ENCODE measurements at regions of chr3 and their contacts with region 1.

Region 1: DNA sequence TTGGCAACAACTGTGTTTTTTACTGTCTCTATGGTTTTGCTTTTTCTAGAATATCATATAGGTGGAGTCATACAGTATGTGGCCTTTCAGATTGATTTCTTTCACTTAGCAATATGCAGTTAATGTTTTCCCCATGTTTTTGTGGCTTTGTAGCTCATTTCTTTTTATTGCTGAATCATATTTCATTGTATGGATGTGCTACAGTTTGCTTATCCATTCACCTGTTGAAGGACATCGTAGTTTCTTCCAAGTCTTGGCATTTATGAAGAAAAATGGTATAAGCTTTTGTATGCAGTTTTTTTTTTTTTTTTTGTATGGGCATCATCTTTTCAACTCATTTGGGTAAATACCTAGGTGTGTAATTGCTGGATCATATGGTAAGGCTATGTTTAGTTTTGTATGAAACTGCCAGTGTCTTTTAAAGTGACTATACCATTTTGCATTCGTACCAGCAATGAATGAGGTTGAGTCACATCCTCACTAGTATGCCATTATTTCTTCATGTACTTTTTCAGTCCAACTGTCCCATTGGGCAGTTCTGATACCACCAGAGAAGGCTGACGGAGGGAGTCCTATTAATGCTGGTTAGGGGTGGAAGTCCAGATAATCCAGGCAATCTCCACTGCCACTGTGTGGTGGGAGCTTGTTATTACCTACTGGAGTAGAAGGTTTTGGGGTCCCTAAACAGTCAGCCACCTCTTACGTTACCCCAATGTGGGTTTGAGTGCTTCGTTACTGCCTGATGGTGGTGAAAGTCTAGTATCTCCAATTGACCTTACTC is 210.5 kb downstream of the DOCK3 start:
- DNase-seq: no peak
- ATAC-seq: no peak; the same call in 1 of the 2 replicates
- H3K4me3 ChIP-seq: no peak overlapping the region
- H3K27ac ChIP-seq: no peak overlapping the region
- H3K4me1 ChIP-seq: no peaks in the 10 kb centered on the region
- H3K27me3 ChIP-seq: no peaks in the 10 kb centered on the region
- CTCF ChIP-seq: peak in 2 of 3 experiments; percentile 28 to 46; a peak in 2 of 6 replicates
- POLR2A ChIP-seq: no peak
- RAD21 ChIP-seq: peak; percentile 47; the same call in 1 of the 2 replicates

Region 2: DNA sequence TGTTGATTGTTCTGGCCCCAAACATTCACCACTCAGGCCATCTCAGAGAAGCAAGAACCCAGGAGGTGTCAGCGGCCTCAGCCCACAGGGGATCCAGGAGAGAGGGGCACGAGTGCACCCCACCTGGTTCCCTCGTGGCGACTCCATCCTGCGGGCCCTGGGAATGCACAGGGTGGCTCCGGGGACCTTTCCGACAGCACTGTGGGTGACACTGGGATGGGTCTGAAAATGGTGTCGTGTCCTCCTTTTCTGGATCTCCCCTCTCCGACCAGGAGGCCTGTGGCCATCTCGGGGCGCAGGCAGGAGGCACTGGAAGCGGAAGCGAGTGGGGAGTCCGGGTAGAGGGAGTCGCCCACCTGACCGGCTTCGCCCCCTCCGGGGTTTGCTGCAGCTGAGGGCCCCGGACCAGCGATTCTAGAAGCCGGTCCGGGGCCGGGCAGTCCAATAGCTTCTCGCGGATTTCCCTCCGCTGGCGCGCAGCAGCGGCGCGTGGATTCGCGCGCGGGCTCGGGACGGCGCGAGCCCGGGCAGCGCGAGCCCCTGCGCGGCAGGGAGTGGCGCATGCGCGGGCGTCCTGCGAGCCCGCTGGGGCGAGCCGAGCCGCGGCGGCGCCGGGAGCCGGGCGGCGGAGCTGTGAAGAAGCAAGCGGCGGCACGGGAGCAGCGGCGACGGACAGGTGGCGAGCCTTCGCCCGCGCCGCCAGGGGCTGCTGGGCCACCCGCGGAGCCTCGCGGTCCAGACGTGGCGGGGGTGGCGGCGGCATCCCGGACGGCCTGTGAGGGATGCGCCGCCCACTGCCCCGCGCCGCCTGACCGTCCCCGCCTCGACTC is 210.7 kb before region 1 on chr3 and contains the start of gene DOCK3:
- CTCF ChIA-PET with region 1: no interaction called
- POLR2A ChIA-PET with region 1: no interaction called
- RAD21 ChIA-PET with region 1: no interaction called
- intact Hi-C with region 1: loop called (anchors 5 kb)
- DNase-seq: no peak
- ATAC-seq: peak; percentile 83
- H3K4me3 ChIP-seq: peak within 1 kb of the TSS; percentile 56 to 61
- H3K27ac ChIP-seq: peak within 1 kb of the TSS; percentile 70; the same call in 1 of the 2 replicates
- H3K4me1 ChIP-seq: peaks cover 24 to 34% of the 10 kb centered on the region in 2 experiments
- H3K27me3 ChIP-seq: no peaks in the 10 kb centered on the region
- CTCF ChIP-seq: no peak
- POLR2A ChIP-seq: peak; percentile 44
- RAD21 ChIP-seq: no peak
- total RNA-seq, gene DOCK3: 4.2 TPM

Region 3: DNA sequence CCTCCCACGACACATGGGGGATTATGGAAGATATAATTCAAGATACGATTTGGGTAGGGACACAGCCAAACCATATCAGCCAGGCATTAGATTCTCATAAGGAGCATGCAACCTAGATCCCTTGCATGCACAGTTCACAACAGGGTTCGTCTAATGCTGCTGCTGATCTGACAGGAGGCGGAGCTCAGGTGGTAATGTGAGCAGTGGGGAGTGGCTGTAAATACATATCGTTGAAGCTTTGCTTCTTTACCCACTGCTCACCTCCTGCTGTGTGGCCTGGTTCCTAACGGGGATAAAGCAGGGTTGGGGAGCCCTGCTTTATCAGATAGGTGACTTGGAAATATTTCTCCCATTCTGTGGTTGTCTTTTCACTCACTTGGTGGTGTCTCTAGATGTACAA is 195.7 kb before region 1 on chr3:
- CTCF ChIA-PET with region 1: no interaction called
- POLR2A ChIA-PET with region 1: no interaction called
- RAD21 ChIA-PET with region 1: no interaction called
- intact Hi-C with region 1: no loop called
- DNase-seq: no peak
- ATAC-seq: no peak
- H3K4me3 ChIP-seq: no peak overlapping the region
- H3K27ac ChIP-seq: no peak overlapping the region
- H3K4me1 ChIP-seq: no peaks in the 10 kb centered on the region
- H3K27me3 ChIP-seq: no peaks in the 10 kb centered on the region
- CTCF ChIP-seq: no peak
- POLR2A ChIP-seq: no peak
- RAD21 ChIP-seq: no peak

Region 4: DNA sequence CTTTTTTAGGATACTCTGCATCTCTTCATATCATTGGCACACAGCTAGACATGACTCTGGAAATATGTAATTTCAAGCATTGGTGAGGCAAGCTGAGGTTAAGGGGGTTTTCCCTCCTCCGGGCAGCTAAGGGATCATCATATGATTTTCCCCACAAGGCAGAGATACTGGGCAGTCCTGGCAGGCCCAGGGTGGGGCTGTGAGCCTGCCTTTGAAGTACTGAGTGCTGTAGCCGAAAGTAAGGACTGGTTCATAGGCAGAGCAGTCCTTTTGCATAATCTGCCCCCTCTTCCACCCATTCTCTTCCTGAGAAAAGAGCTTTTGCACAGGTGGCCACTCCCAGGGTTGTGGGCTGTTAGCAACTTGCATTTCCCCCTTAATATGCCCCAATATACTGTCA is 331.0 kb after region 1 on chr3:
- CTCF ChIA-PET with region 1: no interaction called
- POLR2A ChIA-PET with region 1: no interaction called
- RAD21 ChIA-PET with region 1: no interaction called
- intact Hi-C with region 1: no loop called
- DNase-seq: no peak
- ATAC-seq: no peak
- H3K4me3 ChIP-seq: no peak overlapping the region
- H3K27ac ChIP-seq: no peak overlapping the region
- H3K4me1 ChIP-seq: no peaks in the 10 kb centered on the region
- H3K27me3 ChIP-seq: no peaks in the 10 kb centered on the region
- CTCF ChIP-seq: no peak
- POLR2A ChIP-seq: no peak
- RAD21 ChIP-seq: no peak